Activated B cell treated with CpG ODN at 0.5 μM for 24 hours (primary cell): ENCODE measurements at regions of chr17 and their contacts with region 1.

Region 1: DNA sequence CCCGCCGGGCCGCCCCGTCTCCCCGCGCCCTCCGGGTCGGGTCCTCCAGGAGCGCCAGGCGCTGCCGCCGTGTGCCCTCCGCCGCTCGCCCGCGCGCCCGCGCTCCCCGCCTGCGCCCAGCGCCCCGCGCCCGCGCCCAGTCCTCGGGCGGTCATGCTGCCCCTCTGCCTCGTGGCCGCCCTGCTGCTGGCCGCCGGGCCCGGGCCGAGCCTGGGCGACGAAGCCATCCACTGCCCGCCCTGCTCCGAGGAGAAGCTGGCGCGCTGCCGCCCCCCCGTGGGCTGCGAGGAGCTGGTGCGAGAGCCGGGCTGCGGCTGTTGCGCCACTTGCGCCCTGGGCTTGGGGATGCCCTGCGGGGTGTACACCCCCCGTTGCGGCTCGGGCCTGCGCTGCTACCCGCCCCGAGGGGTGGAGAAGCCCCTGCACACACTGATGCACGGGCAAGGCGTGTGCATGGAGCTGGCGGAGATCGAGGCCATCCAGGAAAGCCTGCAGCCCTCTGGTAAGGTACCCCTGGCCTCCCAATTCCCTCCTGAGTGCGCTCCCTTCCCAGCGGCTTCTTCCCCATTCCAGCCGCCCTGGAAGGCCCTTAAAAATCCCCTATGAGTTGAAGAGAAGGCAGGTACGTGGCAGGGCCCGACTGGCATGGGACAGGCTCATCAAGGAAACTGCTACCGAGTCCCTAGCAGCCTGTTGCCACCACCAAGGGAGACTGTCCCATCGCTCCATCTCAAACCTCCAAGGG is 505 bp downstream of the IGFBP4 start:
- DNase-seq: peak; percentile 72
- ATAC-seq: peak; percentile 83
- H3K4me3 Mint-ChIP-seq: peak overlapping the region; percentile 81
- H3K27ac Mint-ChIP-seq: peak overlapping the region; percentile 79
- H3K4me1 Mint-ChIP-seq: peaks cover 37% of the 10 kb centered on the region
- H3K27me3 Mint-ChIP-seq: no peaks in the 10 kb centered on the region
- CTCF ChIP-seq: no peak

Region 2: DNA sequence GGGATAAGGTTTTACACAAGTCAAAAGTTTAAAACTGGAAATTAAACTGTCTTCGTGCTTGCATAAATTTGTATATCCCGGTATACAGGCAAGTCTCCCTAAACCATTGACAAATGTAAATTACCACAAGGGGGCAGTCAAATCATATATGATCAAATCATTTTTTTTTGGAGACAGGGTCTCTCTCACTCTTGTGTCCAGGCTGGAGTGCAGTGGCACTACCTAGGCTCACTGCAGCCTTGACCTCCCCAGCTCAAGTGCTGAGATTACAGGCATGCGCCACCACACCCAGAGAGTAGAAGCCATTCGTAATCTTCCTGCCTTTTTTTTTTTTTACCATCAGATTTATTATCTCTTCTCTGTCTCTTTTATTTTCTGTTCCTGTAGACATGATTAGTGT is 44.6 kb before region 1 on chr17:
- CTCF ChIA-PET with region 1: no interaction called
- POLR2A ChIA-PET with region 1: no interaction called
- intact Hi-C with region 1: loop called (anchors 5 kb)
- DNase-seq: no peak
- ATAC-seq: peak; percentile 61
- H3K4me3 Mint-ChIP-seq: no peak overlapping the region
- H3K27ac Mint-ChIP-seq: no peak overlapping the region
- H3K4me1 Mint-ChIP-seq: peaks cover 15% of the 10 kb centered on the region
- H3K27me3 Mint-ChIP-seq: no peaks in the 10 kb centered on the region
- CTCF ChIP-seq: no peak

Region 3: GRCh38 chr17:40474419-40475002 is 30.8 kb after region 1 on chr17:
- CTCF ChIA-PET with region 1: interaction called, 4 read pairs
- POLR2A ChIA-PET with region 1: interaction called, 10 read pairs
- intact Hi-C with region 1: no loop called
- DNase-seq: no peak
- ATAC-seq: no peak
- H3K4me3 Mint-ChIP-seq: no peak overlapping the region
- H3K27ac Mint-ChIP-seq: no peak overlapping the region
- H3K4me1 Mint-ChIP-seq: peaks cover 16% of the 10 kb centered on the region
- H3K27me3 Mint-ChIP-seq: peaks cover 7% of the 10 kb centered on the region
- CTCF ChIP-seq: no peak

Region 4: GRCh38 chr17:40480501-40481003 is 36.8 kb after region 1 on chr17:
- CTCF ChIA-PET with region 1: interaction called, 4 read pairs
- POLR2A ChIA-PET with region 1: interaction called, 10 read pairs
- intact Hi-C with region 1: loop called (anchors 5 kb)
- DNase-seq: peak; percentile 32
- ATAC-seq: peak; percentile 88
- H3K4me3 Mint-ChIP-seq: peak overlapping the region; percentile 41
- H3K27ac Mint-ChIP-seq: peak overlapping the region; percentile 72
- H3K4me1 Mint-ChIP-seq: peaks cover 57% of the 10 kb centered on the region
- H3K27me3 Mint-ChIP-seq: no peaks in the 10 kb centered on the region
- CTCF ChIP-seq: no peak

Region 5: DNA sequence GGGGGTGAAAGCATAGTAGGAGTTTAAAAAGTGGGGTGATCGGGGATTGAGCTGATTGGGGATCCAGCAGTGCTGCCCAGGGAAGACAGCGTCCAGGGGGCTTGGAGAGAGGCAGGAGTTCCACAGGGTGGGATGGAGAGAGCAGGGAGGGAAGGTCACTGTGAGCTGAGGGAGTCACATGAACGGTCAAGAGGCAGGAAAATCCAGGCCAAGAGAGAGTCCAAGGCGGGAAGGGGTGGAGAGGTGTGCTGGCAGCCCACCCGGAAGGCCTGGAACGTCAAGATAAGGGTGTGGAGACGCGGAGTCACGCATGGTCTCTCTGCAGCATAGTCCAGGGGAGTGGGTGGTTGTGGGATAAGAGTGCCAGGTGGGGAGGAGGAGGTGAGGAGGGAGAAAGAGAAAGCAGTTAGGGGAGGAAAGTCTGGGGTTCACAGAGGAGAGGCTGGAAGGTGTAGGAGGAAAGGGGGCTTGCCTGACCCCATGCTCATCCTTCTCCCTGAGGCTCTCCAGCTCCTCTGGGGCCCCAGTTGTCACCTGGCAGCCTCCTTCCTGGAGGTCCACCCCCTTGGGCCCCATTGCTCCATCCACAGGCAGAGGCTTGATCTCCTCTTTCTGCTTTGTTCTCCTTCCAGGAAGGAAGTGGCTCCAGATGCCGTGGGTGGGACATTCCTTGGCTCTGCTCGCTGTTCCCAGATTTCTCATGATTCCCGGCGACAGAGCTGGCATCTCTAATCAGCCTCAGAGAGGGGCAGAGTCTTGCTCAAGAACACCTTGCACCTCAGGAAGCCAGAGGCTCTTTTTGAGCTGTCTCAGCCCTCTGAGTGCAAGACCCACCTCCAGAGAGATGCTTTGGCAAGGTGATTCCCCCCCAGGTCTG is 92.8 kb after region 1 on chr17:
- CTCF ChIA-PET with region 1: interaction called, 111 read pairs
- POLR2A ChIA-PET with region 1: interaction called, 57 read pairs
- intact Hi-C with region 1: loop called (anchors 1 kb)
- DNase-seq: peak; percentile 15
- ATAC-seq: no peak
- H3K4me3 Mint-ChIP-seq: no peak overlapping the region
- H3K27ac Mint-ChIP-seq: peak overlapping the region; percentile 59
- H3K4me1 Mint-ChIP-seq: peaks cover 91% of the 10 kb centered on the region
- H3K27me3 Mint-ChIP-seq: no peaks in the 10 kb centered on the region
- CTCF ChIP-seq: no peak

Region 6: GRCh38 chr17:41648411-41649195 is 1204.8 kb after region 1 on chr17:
- CTCF ChIA-PET with region 1: no interaction called
- POLR2A ChIA-PET with region 1: no interaction called
- intact Hi-C with region 1: loop called (anchors 5 kb)
- DNase-seq: peak; percentile 85
- ATAC-seq: peak; percentile 91
- H3K4me3 Mint-ChIP-seq: peak overlapping the region; percentile 79
- H3K27ac Mint-ChIP-seq: peak overlapping the region; percentile 54
- H3K4me1 Mint-ChIP-seq: peaks cover 10% of the 10 kb centered on the region
- H3K27me3 Mint-ChIP-seq: no peaks in the 10 kb centered on the region
- CTCF ChIP-seq: peak; percentile 88